CD4-positive, alpha-beta memory T cell (primary cell): ENCODE measurements at regions of chrX and their contacts with region 1.

Region 1: DNA sequence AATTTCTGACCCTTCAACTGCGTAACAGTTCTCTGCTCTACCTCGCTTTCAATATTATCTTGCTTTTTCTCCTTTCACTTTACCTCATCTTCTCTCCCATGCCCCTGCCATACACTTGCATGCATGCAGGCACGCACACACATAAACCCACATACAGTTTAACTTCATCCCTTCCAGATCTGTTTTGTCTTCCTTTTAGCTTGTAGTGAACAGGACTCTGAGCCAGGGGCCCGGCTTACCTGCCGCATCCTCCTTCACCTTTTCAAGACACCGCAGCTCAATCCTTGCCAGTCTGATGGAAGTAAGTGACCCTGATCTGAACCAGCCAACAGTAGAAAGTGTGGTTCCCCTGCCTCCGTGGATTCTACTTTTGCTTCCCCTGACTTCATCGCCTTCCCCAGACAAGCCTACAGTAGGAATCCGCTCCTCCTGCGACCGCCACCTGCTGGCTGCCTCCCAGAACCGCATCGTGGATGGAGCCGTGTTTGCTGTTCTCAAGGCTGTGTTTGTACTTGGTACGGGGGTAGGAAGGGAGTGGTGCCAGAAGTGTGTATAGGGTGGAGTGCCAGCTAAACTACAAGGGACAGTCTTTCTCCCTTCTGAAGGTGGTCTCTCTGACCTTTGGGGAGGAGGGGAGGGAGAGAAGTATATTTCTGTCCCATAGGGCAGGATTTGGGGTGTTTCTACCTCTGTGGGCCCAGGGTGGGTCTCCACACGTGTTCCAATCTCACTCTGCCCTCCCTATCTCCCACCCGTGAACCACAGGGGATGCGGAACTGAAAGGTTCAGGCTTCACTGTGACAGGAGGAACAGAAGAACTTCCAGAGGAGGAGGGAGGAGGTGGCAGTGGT is 10.7 kb downstream of the MED12 start:
- DNase-seq: peak; percentile 76 to 80 (median 80)
- H3K4me3 ChIP-seq: no peak overlapping the region
- H3K4me3 Mint-ChIP-seq: peak overlapping the region in 4 of 8 donors; percentile 0 to 64 (median 21)
- H3K27ac ChIP-seq: peak overlapping the region; percentile 28
- H3K27ac Mint-ChIP-seq: peak overlapping the region; percentile 38 to 94 (median 89)
- H3K4me1 ChIP-seq: peaks cover 13% of the 10 kb centered on the region
- H3K4me1 Mint-ChIP-seq: peaks cover 7 to 18% (median 15%) of the 10 kb centered on the region in 4 donors
- H3K27me3 ChIP-seq: no peaks in the 10 kb centered on the region
- H3K27me3 Mint-ChIP-seq: no peaks in the 10 kb centered on the region

Region 2: GRCh38 chrX:70878902-70879301 is 250.2 kb before region 1 on chrX:
- CTCF ChIA-PET with region 1: no interaction called
- POLR2A ChIA-PET with region 1: no interaction called
- intact Hi-C with region 1: no loop called
- DNase-seq: peak in 4 of 5 donors; percentile 4 to 23 (median 14)
- H3K4me3 ChIP-seq: no peak overlapping the region
- H3K4me3 Mint-ChIP-seq: no peak overlapping the region
- H3K27ac ChIP-seq: no peak overlapping the region
- H3K27ac Mint-ChIP-seq: peak overlapping the region in 1 of 7 donors; percentile 60
- H3K4me1 ChIP-seq: no peaks in the 10 kb centered on the region
- H3K4me1 Mint-ChIP-seq: peaks cover 0 to 4% (median 3%) of the 10 kb centered on the region in 4 donors
- H3K27me3 ChIP-seq: no peaks in the 10 kb centered on the region
- H3K27me3 Mint-ChIP-seq: no peaks in the 10 kb centered on the region

Region 3: GRCh38 chrX:71103110-71103983 is 25.8 kb before region 1 on chrX:
- CTCF ChIA-PET with region 1: interaction called, 75 read pairs
- POLR2A ChIA-PET with region 1: interaction called, 47 read pairs
- intact Hi-C with region 1: loop called (anchors 1 kb)
- DNase-seq: peak; percentile 58 to 71 (median 62)
- H3K4me3 ChIP-seq: peak overlapping the region; percentile 11 to 37
- H3K4me3 Mint-ChIP-seq: peak overlapping the region; percentile 79 to 90 (median 84)
- H3K27ac ChIP-seq: peak overlapping the region; percentile 66
- H3K27ac Mint-ChIP-seq: peak overlapping the region; percentile 91 to 97 (median 95)
- H3K4me1 ChIP-seq: peaks cover 90% of the 10 kb centered on the region
- H3K4me1 Mint-ChIP-seq: peaks cover 57 to 92% (median 82%) of the 10 kb centered on the region in 4 donors
- H3K27me3 ChIP-seq: no peaks in the 10 kb centered on the region
- H3K27me3 Mint-ChIP-seq: no peaks in the 10 kb centered on the region

Region 4: DNA sequence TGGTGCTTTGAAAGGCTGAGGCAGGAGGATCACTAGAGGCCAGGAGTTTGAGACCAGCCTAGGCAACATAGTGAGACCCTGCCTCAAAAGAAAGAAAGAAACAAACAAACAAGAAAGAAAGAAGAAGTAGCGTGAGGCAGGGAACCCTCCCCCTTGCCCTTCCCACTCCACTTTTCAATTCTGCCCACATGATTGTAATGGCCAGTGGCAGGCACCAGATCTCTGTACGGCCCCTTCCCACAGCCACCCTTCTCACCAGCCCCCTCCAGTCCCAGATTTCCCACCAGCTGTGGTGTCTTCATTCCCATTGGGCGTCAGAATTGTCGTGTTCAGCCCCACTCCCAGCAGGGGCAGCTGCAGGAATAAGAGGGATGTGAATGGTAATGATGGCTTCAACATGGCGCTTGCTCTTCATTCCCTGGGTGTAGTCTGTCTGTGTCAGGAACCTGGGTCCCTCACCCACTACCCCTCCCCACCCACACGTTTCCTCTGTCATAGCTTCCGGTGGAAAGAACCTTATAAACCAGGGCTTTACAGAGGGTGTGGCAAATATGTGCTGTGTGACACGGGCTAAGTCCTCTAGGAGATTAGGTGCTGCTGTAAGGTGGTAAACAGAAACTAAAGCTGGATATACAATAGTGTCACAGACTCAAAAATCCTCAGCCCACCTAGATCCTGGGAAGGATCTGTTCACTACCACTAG is 17.8 kb before region 1 on chrX and contains the start of gene IL2RG:
- CTCF ChIA-PET with region 1: interaction called, 18 read pairs
- POLR2A ChIA-PET with region 1: interaction called, 20 read pairs
- intact Hi-C with region 1: loop called (anchors 1 kb)
- DNase-seq: peak; percentile 89 to 95 (median 93)
- H3K4me3 ChIP-seq: peak within 1 kb of the TSS; percentile 81 to 93
- H3K4me3 Mint-ChIP-seq: peak within 1 kb of the TSS; percentile 90 to 99 (median 95)
- H3K27ac ChIP-seq: peak within 1 kb of the TSS; percentile 96
- H3K27ac Mint-ChIP-seq: peak within 1 kb of the TSS; percentile 97 to 99 (median 99)
- H3K4me1 ChIP-seq: peaks cover 46% of the 10 kb centered on the region
- H3K4me1 Mint-ChIP-seq: peaks cover 24 to 69% (median 53%) of the 10 kb centered on the region in 4 donors
- H3K27me3 ChIP-seq: no peaks in the 10 kb centered on the region
- H3K27me3 Mint-ChIP-seq: no peaks in the 10 kb centered on the region
- total RNA-seq, gene IL2RG: 378 to 379 TPM

Region 5: GRCh38 chrX:71118032-71118984 is 10.8 kb before region 1 on chrX and contains the start of gene MED12:
- CTCF ChIA-PET with region 1: interaction called, 26 read pairs
- POLR2A ChIA-PET with region 1: interaction called, 15 read pairs
- intact Hi-C with region 1: no loop called
- DNase-seq: peak; percentile 75 to 83 (median 78)
- H3K4me3 ChIP-seq: peak within 1 kb of the TSS; percentile 36 to 69
- H3K4me3 Mint-ChIP-seq: peak within 1 kb of the TSS; percentile 84 to 90 (median 89)
- H3K27ac ChIP-seq: peak within 1 kb of the TSS; percentile 88
- H3K27ac Mint-ChIP-seq: peak within 1 kb of the TSS; percentile 90 to 95 (median 95)
- H3K4me1 ChIP-seq: peaks cover 26% of the 10 kb centered on the region
- H3K4me1 Mint-ChIP-seq: peaks cover 15 to 47% (median 29%) of the 10 kb centered on the region in 4 donors
- H3K27me3 ChIP-seq: no peaks in the 10 kb centered on the region
- H3K27me3 Mint-ChIP-seq: no peaks in the 10 kb centered on the region
- total RNA-seq, gene MED12: 84.4 to 89.9 TPM